ENCODE measurements at regions of chr7 and their contacts with region 1.

Region 1: GRCh38 chr7:43260980-43261878 is 148.8 kb downstream of the HECW1 start:
- DNase-seq: peak; percentile 28 to 54 (median 36)
- H3K4me3 ChIP-seq: no peak overlapping the region
- H3K4me3 Mint-ChIP-seq: no peak overlapping the region
- H3K27ac ChIP-seq: no peak overlapping the region
- H3K27ac Mint-ChIP-seq: no peak overlapping the region
- H3K4me1 ChIP-seq: no peaks in the 10 kb centered on the region
- H3K4me1 Mint-ChIP-seq: no peaks in the 10 kb centered on the region
- H3K27me3 ChIP-seq: no peaks in the 10 kb centered on the region
- H3K27me3 Mint-ChIP-seq: peaks cover 4 to 8% of the 10 kb centered on the region in 2 donors

Region 2: DNA sequence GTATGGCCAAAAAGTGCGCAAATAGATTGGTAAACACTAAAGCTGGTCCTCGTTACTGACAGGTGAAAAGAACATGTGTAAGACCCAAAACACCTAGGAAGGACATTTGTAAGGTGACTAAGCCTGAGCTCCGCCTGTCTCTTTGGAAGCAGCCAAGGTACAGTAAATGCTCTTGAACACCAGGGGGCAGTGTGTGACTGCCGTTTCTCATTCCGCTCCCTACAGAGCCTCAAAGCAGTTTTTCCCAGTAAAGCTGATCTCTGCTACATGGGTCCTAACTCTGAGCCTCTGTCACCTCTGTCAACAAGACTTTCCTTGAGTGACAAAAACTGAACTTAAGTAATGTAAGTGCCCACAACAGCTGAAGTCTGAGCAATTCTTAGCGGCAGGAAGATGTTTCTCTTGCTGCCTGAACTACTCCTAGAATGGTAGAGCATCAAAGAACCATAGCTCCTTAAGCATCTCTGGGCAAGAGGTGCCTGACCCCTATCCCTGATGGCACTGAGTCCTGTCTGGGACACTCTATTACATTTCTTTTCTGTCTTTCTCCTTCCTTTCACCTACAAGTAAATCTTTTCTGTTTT is 1320.4 kb before region 1 on chr7:
- CTCF ChIA-PET with region 1: interaction called, 3 read pairs
- POLR2A ChIA-PET with region 1: no interaction called
- intact Hi-C with region 1: loop called (anchors 2 kb)
- DNase-seq: peak in 4 of 5 donors; percentile 34 to 41 (median 37)
- H3K4me3 ChIP-seq: no peak overlapping the region
- H3K4me3 Mint-ChIP-seq: no peak overlapping the region
- H3K27ac ChIP-seq: no peak overlapping the region
- H3K27ac Mint-ChIP-seq: no peak overlapping the region
- H3K4me1 ChIP-seq: no peaks in the 10 kb centered on the region
- H3K4me1 Mint-ChIP-seq: peaks cover 6 to 17% (median 13%) of the 10 kb centered on the region in 4 donors
- H3K27me3 ChIP-seq: no peaks in the 10 kb centered on the region
- H3K27me3 Mint-ChIP-seq: peaks cover 14 to 18% of the 10 kb centered on the region in 2 donors

Region 3: GRCh38 chr7:42940985-42941847 is 320.0 kb before region 1 on chr7:
- CTCF ChIA-PET with region 1: no interaction called
- POLR2A ChIA-PET with region 1: no interaction called
- intact Hi-C with region 1: loop called (anchors 2 kb)
- DNase-seq: peak; percentile 52 to 66 (median 56)
- H3K4me3 ChIP-seq: no peak overlapping the region
- H3K4me3 Mint-ChIP-seq: no peak overlapping the region
- H3K27ac ChIP-seq: no peak overlapping the region
- H3K27ac Mint-ChIP-seq: no peak overlapping the region
- H3K4me1 ChIP-seq: no peaks in the 10 kb centered on the region
- H3K4me1 Mint-ChIP-seq: peaks cover 8 to 25% (median 15%) of the 10 kb centered on the region in 4 donors
- H3K27me3 ChIP-seq: no peaks in the 10 kb centered on the region
- H3K27me3 Mint-ChIP-seq: no peaks in the 10 kb centered on the region

Region 4: GRCh38 chr7:43248961-43249822 is 12.0 kb before region 1 on chr7:
- CTCF ChIA-PET with region 1: interaction called, 55 read pairs
- POLR2A ChIA-PET with region 1: no interaction called
- intact Hi-C with region 1: no loop called
- DNase-seq: no peak
- H3K4me3 ChIP-seq: no peak overlapping the region
- H3K4me3 Mint-ChIP-seq: no peak overlapping the region
- H3K27ac ChIP-seq: no peak overlapping the region
- H3K27ac Mint-ChIP-seq: no peak overlapping the region
- H3K4me1 ChIP-seq: no peaks in the 10 kb centered on the region
- H3K4me1 Mint-ChIP-seq: no peaks in the 10 kb centered on the region
- H3K27me3 ChIP-seq: no peaks in the 10 kb centered on the region
- H3K27me3 Mint-ChIP-seq: peaks cover 4 to 16% of the 10 kb centered on the region in 2 donors

Region 5: GRCh38 chr7:43273939-43274719 is 12.9 kb after region 1 on chr7:
- CTCF ChIA-PET with region 1: interaction called, 10 read pairs
- POLR2A ChIA-PET with region 1: no interaction called
- intact Hi-C with region 1: no loop called
- DNase-seq: no peak
- H3K4me3 ChIP-seq: no peak overlapping the region
- H3K4me3 Mint-ChIP-seq: no peak overlapping the region
- H3K27ac ChIP-seq: no peak overlapping the region
- H3K27ac Mint-ChIP-seq: no peak overlapping the region
- H3K4me1 ChIP-seq: no peaks in the 10 kb centered on the region
- H3K4me1 Mint-ChIP-seq: no peaks in the 10 kb centered on the region
- H3K27me3 ChIP-seq: no peaks in the 10 kb centered on the region
- H3K27me3 Mint-ChIP-seq: peaks cover 4 to 17% of the 10 kb centered on the region in 2 donors

Region 6: DNA sequence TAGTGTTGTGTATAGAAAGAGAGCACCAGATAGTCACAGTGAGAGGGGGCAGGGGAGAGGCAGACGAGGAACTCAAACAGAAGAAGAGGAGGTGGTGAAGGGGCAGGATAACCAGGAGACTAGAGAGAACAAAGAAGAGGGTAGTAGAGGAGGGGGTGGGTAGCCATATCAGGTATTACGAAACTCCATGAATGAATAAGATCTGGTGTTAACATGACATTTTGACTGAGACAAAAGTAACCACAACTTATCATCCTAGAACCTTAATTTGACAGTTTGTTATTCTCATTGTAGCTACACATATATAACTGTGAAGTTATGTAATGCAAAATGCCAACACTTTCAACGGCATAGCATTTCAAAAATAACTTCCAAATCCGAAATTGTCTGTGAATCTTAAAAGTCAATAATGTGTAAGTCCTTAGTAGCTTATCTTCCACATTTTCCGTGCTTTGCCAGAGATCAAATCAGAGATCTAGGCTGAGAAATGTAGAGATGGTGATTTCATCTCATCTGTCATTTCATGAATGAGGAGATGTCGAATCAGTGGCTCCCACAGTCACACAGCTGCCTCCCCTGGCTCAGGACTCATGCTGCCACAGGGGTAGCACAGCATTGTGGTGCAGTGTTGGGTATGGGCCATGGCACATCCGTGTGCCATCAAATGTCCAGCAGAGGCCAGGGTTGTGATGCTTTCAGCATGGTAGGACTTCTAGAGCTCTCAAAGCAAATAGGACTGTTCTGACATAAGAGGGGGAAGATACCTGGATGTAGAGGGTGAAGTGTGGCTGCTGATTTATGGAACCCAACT is 53.4 kb after region 1 on chr7:
- CTCF ChIA-PET with region 1: no interaction called
- POLR2A ChIA-PET with region 1: no interaction called
- intact Hi-C with region 1: no loop called
- DNase-seq: no peak
- H3K4me3 ChIP-seq: peak overlapping the region in 1 of 2 donors; percentile 25
- H3K4me3 Mint-ChIP-seq: peak overlapping the region in 5 of 8 donors; percentile 27 to 56 (median 48)
- H3K27ac ChIP-seq: no peak overlapping the region
- H3K27ac Mint-ChIP-seq: peak overlapping the region in 2 of 7 donors; percentile 9 to 44
- H3K4me1 ChIP-seq: peaks cover 9% of the 10 kb centered on the region
- H3K4me1 Mint-ChIP-seq: peaks cover 12 to 18% (median 15%) of the 10 kb centered on the region in 4 donors
- H3K27me3 ChIP-seq: no peaks in the 10 kb centered on the region
- H3K27me3 Mint-ChIP-seq: peaks cover 0 to 3% of the 10 kb centered on the region in 2 donors

Region 7: GRCh38 chr7:43721193-43721806 is 460.1 kb after region 1 on chr7:
- CTCF ChIA-PET with region 1: no interaction called
- POLR2A ChIA-PET with region 1: no interaction called
- intact Hi-C with region 1: loop called (anchors 1 kb)
- DNase-seq: peak in 4 of 5 donors; percentile 54 to 59 (median 58)
- H3K4me3 ChIP-seq: no peak overlapping the region
- H3K4me3 Mint-ChIP-seq: no peak overlapping the region
- H3K27ac ChIP-seq: no peak overlapping the region
- H3K27ac Mint-ChIP-seq: peak overlapping the region in 3 of 7 donors; percentile 14 to 71 (median 47)
- H3K4me1 ChIP-seq: no peaks in the 10 kb centered on the region
- H3K4me1 Mint-ChIP-seq: peaks cover 23 to 46% (median 34%) of the 10 kb centered on the region in 4 donors
- H3K27me3 ChIP-seq: no peaks in the 10 kb centered on the region
- H3K27me3 Mint-ChIP-seq: no peaks in the 10 kb centered on the region

Measured in CD4-positive, alpha-beta memory T cell (primary cell).